ENCODE measurements at regions of chr1 and their contacts with region 1.

Region 1: DNA sequence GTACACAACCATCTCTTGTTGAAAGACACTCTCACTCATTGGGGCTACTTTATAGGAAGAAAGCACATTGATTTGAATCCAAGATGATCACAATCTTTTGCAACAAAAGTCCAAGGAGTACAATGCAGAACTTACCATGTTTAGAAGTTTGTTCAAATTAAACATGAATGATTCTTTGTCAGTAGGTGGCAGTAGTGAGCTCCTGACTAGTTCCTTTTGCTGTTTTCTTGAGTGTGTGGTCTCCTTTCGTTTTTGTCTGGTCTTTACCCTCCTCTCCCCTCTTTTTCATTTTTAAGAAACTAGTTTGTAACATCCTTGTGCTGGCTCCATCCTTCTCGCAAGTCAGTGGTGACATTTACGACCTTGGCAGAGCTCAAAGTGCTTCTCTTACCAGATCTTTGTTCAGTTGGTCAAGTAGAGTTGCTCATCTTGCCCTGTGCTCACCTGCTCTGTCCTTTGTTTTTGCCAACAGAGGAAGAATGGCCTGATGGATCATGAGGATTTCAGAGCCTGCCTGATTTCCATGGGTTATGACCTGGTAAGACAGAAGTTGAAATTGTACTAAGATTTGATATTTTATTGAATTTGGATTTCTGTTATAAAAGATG is 35.7 kb upstream of the MTR start:
- DNase-seq: peak in 1 of 4 donors; percentile 26
- ATAC-seq: peak; percentile 64
- H3K4me3 ChIP-seq: no peak overlapping the region
- H3K27ac ChIP-seq: no peak overlapping the region
- H3K4me1 ChIP-seq: no peaks in the 10 kb centered on the region
- H3K27me3 ChIP-seq: no peaks in the 10 kb centered on the region
- CTCF ChIP-seq: peak; percentile 39 to 59

Region 2: GRCh38 chr1:236830560-236830959 is 71.2 kb after region 1 on chr1:
- intact Hi-C with region 1: no loop called
- DNase-seq: no peak
- ATAC-seq: no peak
- H3K4me3 ChIP-seq: no peak overlapping the region
- H3K27ac ChIP-seq: no peak overlapping the region
- H3K4me1 ChIP-seq: no peaks in the 10 kb centered on the region
- H3K27me3 ChIP-seq: no peaks in the 10 kb centered on the region
- CTCF ChIP-seq: no peak

Region 3: GRCh38 chr1:236854602-236854978 is 95.2 kb after region 1 on chr1:
- intact Hi-C with region 1: loop called in 1 of 2 experiments (anchors 10 kb)
- DNase-seq: no peak
- ATAC-seq: no peak
- H3K4me3 ChIP-seq: no peak overlapping the region
- H3K27ac ChIP-seq: no peak overlapping the region
- H3K4me1 ChIP-seq: no peaks in the 10 kb centered on the region
- H3K27me3 ChIP-seq: no peaks in the 10 kb centered on the region
- CTCF ChIP-seq: no peak

Region 4: GRCh38 chr1:236868625-236869467 is 109.5 kb after region 1 on chr1:
- intact Hi-C with region 1: loop called in 1 of 2 experiments (anchors 5 kb)
- DNase-seq: peak in 3 of 4 donors; percentile 12 to 48 (median 40)
- ATAC-seq: peak; percentile 91
- H3K4me3 ChIP-seq: no peak overlapping the region
- H3K27ac ChIP-seq: peak overlapping the region in 1 of 2 donors; percentile 78
- H3K4me1 ChIP-seq: peaks cover 0 to 23% of the 10 kb centered on the region in 2 donors
- H3K27me3 ChIP-seq: no peaks in the 10 kb centered on the region
- CTCF ChIP-seq: peak; percentile 94

Measured in left lung (tissue), 14 donors.